Activated T-helper 2 cell treated with anti-CD3 and anti-CD28 coated beads, Interferon-gamma antibody, Interleukin-2, Interleukin-4, amounts not matched to agents 10 μg/mL and 5 μg/mL and 100 μg/mL, durations not matched to agents 14 hours and 24 hours and 36 hours (primary cell): ENCODE measurements at regions of chr6 and their contacts with region 1.

Region 1: DNA sequence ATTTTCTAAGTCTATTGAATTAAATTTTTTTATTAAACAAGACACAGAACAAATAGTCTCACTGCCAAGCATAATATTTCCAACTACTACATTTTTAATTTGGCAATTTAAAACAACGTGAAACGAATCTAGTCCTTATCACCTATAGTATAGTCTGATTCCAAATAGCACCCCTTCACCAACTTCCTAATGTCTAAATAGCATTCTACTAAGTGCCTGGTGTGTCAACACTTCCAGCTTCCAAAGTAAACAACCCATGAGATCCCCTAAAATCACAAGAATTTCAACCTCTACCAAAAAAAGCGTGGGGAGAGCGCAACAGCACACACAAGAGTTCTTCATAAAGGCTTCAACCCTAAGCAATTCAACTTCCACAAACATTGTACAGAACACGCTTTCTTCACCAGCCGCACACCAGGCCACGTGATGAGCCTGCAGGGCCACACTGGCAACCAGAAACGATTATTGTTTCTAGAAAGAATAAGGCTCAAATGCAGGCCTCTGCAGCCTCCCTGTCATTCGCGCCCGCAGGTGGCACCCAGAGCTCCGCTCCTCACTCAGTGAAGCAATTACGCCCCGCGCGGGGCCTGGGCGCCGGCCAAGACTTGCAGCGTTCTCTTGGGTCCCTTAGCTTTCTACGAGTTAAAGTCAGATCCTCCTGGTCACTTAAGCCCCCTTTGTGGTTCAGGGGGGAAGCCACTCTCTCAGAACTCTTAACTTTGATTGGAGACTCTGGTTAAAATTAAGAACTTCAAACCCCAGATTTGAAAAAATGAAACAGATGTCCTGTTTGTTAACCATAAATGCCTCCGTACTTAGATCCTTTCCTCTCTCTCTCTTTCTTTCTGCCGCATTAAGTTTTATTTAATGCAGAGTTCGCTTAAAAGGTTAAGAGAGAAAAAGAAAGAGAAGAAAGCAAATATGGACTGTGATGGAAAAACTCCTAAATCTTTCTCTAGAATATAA is 18.3 kb downstream of the SIM1 start:
- DNase-seq: no peak
- H3K4me3 Mint-ChIP-seq: no peak overlapping the region
- H3K27ac Mint-ChIP-seq: no peak overlapping the region
- H3K4me1 Mint-ChIP-seq: peaks cover 8% of the 10 kb centered on the region
- H3K27me3 Mint-ChIP-seq: peaks cover 63% of the 10 kb centered on the region

Region 2: DNA sequence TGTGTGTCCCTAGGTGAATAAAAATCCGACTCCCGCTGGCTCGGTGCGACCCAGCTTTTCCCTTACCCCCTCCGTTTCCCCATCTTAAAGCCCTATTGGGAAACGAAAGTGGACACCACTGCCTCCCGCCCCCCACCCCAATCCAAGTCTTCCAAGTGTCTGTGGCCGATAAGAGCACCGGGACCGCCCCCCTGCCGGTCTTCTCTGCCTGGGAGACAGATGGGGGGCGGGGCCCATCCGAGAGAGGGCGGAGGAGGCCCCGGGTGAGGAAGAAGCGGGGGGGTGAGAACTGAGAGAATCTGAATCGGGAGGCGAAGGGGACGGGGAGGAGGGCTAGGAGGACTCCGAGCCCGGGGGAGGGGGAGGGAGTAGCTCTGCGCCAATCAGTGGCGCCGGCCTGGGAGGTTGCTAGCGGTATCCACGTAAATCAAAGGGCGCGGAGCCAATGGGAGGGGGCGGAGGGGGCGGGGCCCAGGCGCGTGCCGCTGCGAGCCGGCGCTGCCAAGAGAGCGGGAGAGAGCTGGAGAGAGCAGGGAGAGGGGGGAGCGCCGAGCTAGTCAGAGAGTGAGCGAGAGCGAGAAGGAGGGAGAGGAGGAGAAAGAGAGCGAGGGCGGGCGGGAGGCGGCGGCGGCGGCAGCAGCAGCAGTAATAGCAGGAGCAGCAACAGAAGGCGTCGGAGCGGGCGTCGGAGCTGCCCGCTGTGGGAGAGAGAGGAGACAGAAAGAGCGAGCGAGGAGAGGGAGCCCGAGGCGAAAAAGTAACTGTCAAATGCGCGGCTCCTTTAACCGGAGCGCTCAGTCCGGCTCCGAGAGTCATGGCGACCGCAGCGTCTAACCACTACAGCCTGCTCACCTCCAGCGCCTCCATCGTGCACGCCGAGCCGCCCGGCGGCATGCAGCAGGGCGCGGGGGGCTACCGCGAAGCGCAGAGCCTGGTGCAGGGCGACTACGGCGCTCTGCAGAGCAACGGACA is 1612.1 kb before region 1 on chr6 and contains the start of gene POU3F2:
- intact Hi-C with region 1: loop called (anchors 5 kb)
- DNase-seq: peak; percentile 38
- H3K4me3 Mint-ChIP-seq: peak within 1 kb of the TSS; percentile 77
- H3K27ac Mint-ChIP-seq: no peak within 1 kb of the TSS
- H3K4me1 Mint-ChIP-seq: peaks cover 30% of the 10 kb centered on the region
- H3K27me3 Mint-ChIP-seq: peaks cover 76% of the 10 kb centered on the region
- total RNA-seq, gene POU3F2: not detected in 2 replicates

Region 3: GRCh38 chr6:99993533-99994251 is 452.7 kb before region 1 on chr6 and contains the start of gene MCHR2:
- intact Hi-C with region 1: loop called (anchors 5 kb)
- DNase-seq: no peak
- H3K4me3 Mint-ChIP-seq: no peak within 1 kb of the TSS
- H3K27ac Mint-ChIP-seq: no peak within 1 kb of the TSS
- H3K4me1 Mint-ChIP-seq: no peaks in the 10 kb centered on the region
- H3K27me3 Mint-ChIP-seq: peaks cover 33% of the 10 kb centered on the region
- total RNA-seq, gene MCHR2: not detected in 2 replicates

Region 4: GRCh38 chr6:100366419-100366818 is 80.0 kb before region 1 on chr6:
- intact Hi-C with region 1: no loop called
- DNase-seq: no peak
- H3K4me3 Mint-ChIP-seq: no peak overlapping the region
- H3K27ac Mint-ChIP-seq: no peak overlapping the region
- H3K4me1 Mint-ChIP-seq: no peaks in the 10 kb centered on the region
- H3K27me3 Mint-ChIP-seq: peaks cover 6% of the 10 kb centered on the region

Region 5: GRCh38 chr6:100464903-100465700 is 18.7 kb after region 1 on chr6 and contains the start of gene SIM1:
- intact Hi-C with region 1: loop called (anchors 1 kb)
- DNase-seq: no peak
- H3K4me3 Mint-ChIP-seq: no peak within 1 kb of the TSS
- H3K27ac Mint-ChIP-seq: no peak within 1 kb of the TSS
- H3K4me1 Mint-ChIP-seq: peaks cover 25% of the 10 kb centered on the region
- H3K27me3 Mint-ChIP-seq: peaks cover 89% of the 10 kb centered on the region
- total RNA-seq, gene SIM1: 0.02 TPM in 1 of 2 replicates, not detected in the other